MCF 10A (cell line): ENCODE measurements at regions of chr1 and their contacts with region 1.

Region 1: GRCh38 chr1:93814059-93814794 is 64.8 kb downstream of the DNTTIP2 start:
- DNase-seq: peak; percentile 90
- H3K4me3 Mint-ChIP-seq: no peak overlapping the region
- H3K27ac Mint-ChIP-seq: no peak overlapping the region
- H3K4me1 Mint-ChIP-seq: peaks cover 52% of the 10 kb centered on the region
- H3K27me3 Mint-ChIP-seq: no peaks in the 10 kb centered on the region
- CTCF ChIP-seq: peak; percentile 97

Region 2: DNA sequence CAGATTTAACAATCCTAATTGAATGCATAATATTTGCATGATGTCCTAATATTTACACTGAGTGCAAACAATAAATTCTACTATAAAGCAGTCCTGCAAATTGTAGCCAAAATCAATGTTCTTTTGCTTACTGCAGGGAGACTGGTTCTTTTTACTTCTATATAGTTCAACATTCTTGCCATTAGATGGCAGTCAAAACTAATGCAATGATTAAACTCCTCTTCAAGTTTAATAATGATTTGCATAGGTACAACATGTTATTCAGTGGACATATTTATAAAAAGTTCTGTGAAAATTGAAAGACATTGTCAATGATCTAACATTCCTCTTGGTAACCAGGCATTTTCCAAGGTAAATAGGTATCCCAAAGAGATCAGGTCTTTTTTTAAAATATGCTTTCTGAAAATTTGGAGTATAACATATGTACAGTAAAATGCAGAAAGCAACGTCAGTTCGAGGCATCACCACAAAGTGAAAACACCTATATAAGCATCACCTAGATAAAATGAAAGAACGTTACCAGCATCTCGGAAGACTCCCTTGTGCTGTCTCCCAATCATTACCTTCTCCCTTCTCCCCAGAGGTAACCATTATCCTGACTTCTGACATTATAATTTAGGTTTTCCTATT is 376.1 kb before region 1 on chr1:
- CTCF ChIA-PET with region 1: interaction called, 21 read pairs
- POLR2A ChIA-PET with region 1: interaction called, 4 read pairs
- intact Hi-C with region 1: loop called (anchors 1 kb)
- DNase-seq: peak; percentile 55
- H3K4me3 Mint-ChIP-seq: no peak overlapping the region
- H3K27ac Mint-ChIP-seq: no peak overlapping the region
- H3K4me1 Mint-ChIP-seq: peaks cover 6% of the 10 kb centered on the region
- H3K27me3 Mint-ChIP-seq: no peaks in the 10 kb centered on the region
- CTCF ChIP-seq: peak; percentile 45

Region 3: GRCh38 chr1:93615582-93616150 is 198.6 kb before region 1 on chr1:
- CTCF ChIA-PET with region 1: interaction called, 21 read pairs
- POLR2A ChIA-PET with region 1: interaction called, 3 read pairs
- intact Hi-C with region 1: no loop called
- DNase-seq: peak; percentile 60
- H3K4me3 Mint-ChIP-seq: no peak overlapping the region
- H3K27ac Mint-ChIP-seq: peak overlapping the region; percentile 97
- H3K4me1 Mint-ChIP-seq: peaks cover 65% of the 10 kb centered on the region
- H3K27me3 Mint-ChIP-seq: no peaks in the 10 kb centered on the region
- CTCF ChIP-seq: no peak

Region 4: DNA sequence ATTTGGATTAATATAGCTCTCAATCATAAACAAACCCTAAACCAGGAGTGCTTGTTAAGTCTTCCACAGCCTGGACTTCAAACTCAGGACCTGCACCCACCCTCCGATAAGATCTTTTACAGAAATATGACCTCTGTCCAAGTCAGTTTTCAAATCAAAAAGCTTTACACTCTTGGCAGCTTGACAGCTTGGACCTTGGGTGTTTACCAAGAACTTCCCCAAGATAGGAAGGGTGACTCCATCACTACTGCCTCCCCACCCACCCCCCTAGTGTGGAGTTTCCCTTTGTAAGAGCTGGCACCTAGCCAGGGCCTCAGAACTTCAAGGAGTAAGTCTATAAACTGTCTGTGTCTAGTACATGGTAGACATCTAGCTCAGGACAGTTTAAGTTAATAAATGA is 142.2 kb before region 1 on chr1:
- CTCF ChIA-PET with region 1: interaction called, 57 read pairs
- POLR2A ChIA-PET with region 1: interaction called, 62 read pairs
- intact Hi-C with region 1: no loop called
- DNase-seq: peak; percentile 89
- H3K4me3 Mint-ChIP-seq: no peak overlapping the region
- H3K27ac Mint-ChIP-seq: peak overlapping the region; percentile 42
- H3K4me1 Mint-ChIP-seq: peaks cover 63% of the 10 kb centered on the region
- H3K27me3 Mint-ChIP-seq: no peaks in the 10 kb centered on the region
- CTCF ChIP-seq: no peak

Region 5: GRCh38 chr1:93701619-93702018 is 112.6 kb before region 1 on chr1:
- CTCF ChIA-PET with region 1: interaction called, 37 read pairs
- POLR2A ChIA-PET with region 1: interaction called, 17 read pairs
- intact Hi-C with region 1: no loop called
- DNase-seq: peak; percentile 99
- H3K4me3 Mint-ChIP-seq: peak overlapping the region; percentile 47
- H3K27ac Mint-ChIP-seq: peak overlapping the region; percentile 95
- H3K4me1 Mint-ChIP-seq: peaks cover 26% of the 10 kb centered on the region
- H3K27me3 Mint-ChIP-seq: no peaks in the 10 kb centered on the region
- CTCF ChIP-seq: no peak

Region 6: DNA sequence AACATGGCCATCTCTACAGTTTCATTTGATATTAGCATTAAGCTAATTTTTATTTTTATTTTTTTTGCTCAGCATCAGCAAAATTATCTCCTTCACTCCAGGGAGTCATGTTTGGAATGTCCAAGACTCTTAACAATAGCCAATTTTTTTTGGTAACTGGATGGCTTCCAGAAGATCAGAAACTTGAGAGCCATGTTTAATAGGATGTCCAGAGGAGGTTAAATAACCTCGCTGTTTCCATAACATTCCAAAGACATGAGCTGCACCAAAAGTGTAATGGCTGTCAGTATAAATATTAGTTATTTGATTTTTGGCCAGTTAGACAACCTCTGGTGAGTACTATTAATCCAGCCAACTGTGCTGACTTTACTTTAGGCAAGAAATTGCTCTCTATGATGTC is 15.9 kb before region 1 on chr1:
- CTCF ChIA-PET with region 1: interaction called, 32 read pairs
- POLR2A ChIA-PET with region 1: interaction called, 14 read pairs
- intact Hi-C with region 1: no loop called
- DNase-seq: peak; percentile 75
- H3K4me3 Mint-ChIP-seq: no peak overlapping the region
- H3K27ac Mint-ChIP-seq: peak overlapping the region; percentile 13
- H3K4me1 Mint-ChIP-seq: peaks cover 12% of the 10 kb centered on the region
- H3K27me3 Mint-ChIP-seq: no peaks in the 10 kb centered on the region
- CTCF ChIP-seq: no peak